Activated T-helper 1 cell treated with anti-CD3 and anti-CD28 coated beads, Interleukin-12 subunit alpha, Interleukin-12 subunit beta, Interleukin-2, Interleukin-4 antibody, amounts not matched to agents 30 ng/mL and 10 ng/mL and 1 ng/mL, durations not matched to agents 14 hours and 24 hours and 36 hours (primary cell): ENCODE measurements at regions of chr3 and their contacts with region 1.

Region 1: DNA sequence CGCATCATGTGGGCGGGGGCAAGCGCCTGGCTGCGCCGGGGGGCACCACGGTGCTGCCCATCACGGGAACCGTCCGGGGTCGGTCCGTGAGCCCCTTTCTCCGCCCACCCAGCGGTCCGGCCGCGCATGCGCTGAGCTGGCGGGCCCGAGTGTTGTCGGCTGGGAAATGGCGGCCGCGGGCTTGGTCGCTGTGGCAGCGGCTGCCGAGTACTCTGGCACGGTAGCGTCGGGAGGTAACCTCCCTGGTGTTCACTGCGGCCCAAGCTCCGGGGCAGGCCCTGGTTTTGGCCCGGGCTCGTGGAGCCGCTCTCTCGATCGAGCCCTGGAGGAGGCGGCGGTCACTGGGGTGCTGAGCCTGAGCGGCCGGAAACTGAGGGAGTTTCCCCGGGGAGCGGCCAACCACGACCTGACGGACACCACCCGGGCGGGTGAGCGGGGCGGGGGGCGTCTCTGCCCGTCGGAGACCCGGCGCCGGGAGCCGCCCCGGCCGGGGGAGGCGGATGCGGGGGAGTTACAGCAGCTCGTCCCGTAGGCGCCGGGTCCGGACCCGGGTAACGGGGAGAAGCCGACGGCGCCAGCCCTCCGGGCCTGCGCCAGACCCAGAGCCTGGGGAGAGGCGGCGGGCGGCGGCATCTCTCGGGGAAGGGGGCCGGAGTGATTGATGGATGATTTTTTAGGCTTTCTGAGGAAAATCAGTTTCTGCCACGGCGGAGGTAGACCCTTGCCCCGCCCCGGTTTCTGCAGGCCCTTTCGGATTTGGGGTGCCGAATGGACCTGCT is at the start of gene LRCH3:
- DNase-seq: peak; percentile 80
- H3K4me3 Mint-ChIP-seq: peak within 1 kb of the TSS; percentile 98
- H3K27ac Mint-ChIP-seq: peak within 1 kb of the TSS; percentile 98
- H3K4me1 Mint-ChIP-seq: peaks cover 29% of the 10 kb centered on the region
- H3K27me3 Mint-ChIP-seq: peaks cover 2% of the 10 kb centered on the region
- total RNA-seq, gene LRCH3: 50.0 and 57.8 TPM in 2 replicates

Region 2: GRCh38 chr3:197298341-197298857 is 492.9 kb before region 1 on chr3 and contains the start of gene DLG1:
- intact Hi-C with region 1: loop called (anchors 1 kb)
- DNase-seq: peak; percentile 64
- H3K4me3 Mint-ChIP-seq: peak within 1 kb of the TSS; percentile 95
- H3K27ac Mint-ChIP-seq: peak within 1 kb of the TSS; percentile 96
- H3K4me1 Mint-ChIP-seq: peaks cover 39% of the 10 kb centered on the region
- H3K27me3 Mint-ChIP-seq: peaks cover 28% of the 10 kb centered on the region
- total RNA-seq, gene DLG1: 85.0 and 87.1 TPM in 2 replicates

Region 3: DNA sequence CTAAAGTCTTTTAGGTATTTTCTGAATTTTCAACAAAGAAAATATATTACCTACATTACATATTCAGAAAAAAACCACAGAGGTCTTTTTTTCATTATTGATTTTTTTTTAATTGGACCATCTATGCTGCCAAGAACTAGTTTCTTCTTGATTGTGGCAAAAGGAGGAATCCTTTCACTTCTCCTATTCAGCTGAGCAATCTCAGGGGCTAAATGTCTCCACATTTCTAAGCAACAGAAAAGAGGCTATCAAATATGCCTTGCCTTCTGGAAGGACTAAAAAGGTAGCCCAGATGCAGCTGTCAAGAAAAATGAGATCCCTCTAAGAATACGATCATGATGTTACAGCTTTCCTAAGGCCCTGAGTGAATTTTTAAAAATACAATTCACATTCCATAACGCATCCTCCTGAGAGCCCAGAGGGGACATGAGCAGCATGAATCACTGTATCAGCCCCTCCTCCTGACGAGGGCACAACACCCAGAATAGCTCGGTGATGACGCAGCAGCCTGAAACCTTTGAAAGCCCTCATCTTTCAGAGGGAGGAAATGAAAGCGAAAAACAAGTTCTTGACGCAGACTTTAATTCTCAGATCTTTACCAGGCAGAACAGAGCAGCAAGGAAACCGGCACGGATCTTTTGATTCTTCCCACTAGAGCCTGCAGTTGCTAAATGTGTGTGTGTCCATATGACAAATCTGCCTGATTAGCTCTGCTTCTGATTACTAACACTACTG is 79.2 kb before region 1 on chr3:
- intact Hi-C with region 1: loop called (anchors 1 kb)
- DNase-seq: peak; percentile 78
- H3K4me3 Mint-ChIP-seq: peak overlapping the region; percentile 70
- H3K27ac Mint-ChIP-seq: peak overlapping the region; percentile 92
- H3K4me1 Mint-ChIP-seq: peaks cover 32% of the 10 kb centered on the region
- H3K27me3 Mint-ChIP-seq: no peaks in the 10 kb centered on the region

Region 4: GRCh38 chr3:197749601-197750395 is 41.5 kb before region 1 on chr3 and contains the start of gene FYTTD1:
- intact Hi-C with region 1: loop called (anchors 1 kb)
- DNase-seq: peak; percentile 85
- H3K4me3 Mint-ChIP-seq: peak within 1 kb of the TSS; percentile 97
- H3K27ac Mint-ChIP-seq: peak within 1 kb of the TSS; percentile 95
- H3K4me1 Mint-ChIP-seq: peaks cover 44% of the 10 kb centered on the region
- H3K27me3 Mint-ChIP-seq: peaks cover 13% of the 10 kb centered on the region
- total RNA-seq, gene FYTTD1: 59.0 and 77.2 TPM in 2 replicates

Region 5: GRCh38 chr3:197847866-197848401 is 56.6 kb after region 1 on chr3:
- intact Hi-C with region 1: loop called (anchors 2 kb)
- DNase-seq: peak; percentile 18
- H3K4me3 Mint-ChIP-seq: peak overlapping the region; percentile 52
- H3K27ac Mint-ChIP-seq: peak overlapping the region; percentile 83
- H3K4me1 Mint-ChIP-seq: peaks cover 30% of the 10 kb centered on the region
- H3K27me3 Mint-ChIP-seq: no peaks in the 10 kb centered on the region

Region 6: DNA sequence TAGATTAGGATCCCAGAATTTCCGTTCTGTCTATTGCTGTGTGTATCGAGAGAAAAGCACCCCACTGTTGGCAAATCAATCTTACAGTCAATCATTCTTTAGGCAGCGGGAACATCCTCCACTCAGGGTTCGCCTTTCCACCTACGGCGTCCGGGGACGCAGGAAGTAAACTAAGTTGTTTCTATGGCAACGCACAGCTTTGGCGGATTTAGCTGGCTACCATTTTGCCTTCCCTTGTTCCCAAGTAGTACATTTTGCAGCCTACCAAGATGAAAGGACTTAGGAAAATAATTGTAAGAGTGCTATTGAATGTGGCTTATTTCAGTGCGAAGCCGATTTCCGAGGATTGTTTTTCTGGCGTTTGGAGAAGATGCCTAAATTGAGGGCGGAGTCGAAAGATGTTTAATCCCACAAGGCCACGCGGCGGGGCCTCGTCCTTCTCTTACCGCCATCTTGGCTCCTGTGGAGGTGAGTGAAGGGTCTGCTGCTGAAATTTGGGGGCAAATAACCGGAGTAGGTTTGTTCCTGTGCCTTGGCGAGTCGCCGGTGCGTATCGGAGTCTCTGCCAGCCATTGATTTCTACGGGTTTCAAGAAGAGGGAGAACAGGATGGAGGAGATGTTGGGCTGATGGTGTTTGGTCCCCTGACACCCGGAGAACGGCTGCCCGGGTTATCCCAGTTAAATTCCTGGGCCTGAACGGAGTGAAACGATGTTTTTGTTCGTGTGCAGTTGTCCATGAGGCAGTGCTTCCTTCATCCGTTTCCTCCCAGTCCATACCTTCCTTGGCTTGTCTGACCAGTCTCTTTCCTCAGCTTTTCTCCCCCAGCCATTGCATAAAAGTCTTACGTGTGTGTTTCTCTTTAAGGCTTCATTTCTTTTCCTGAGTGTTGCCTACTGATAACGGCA is 158.7 kb after region 1 on chr3 and contains the start of gene RPL35A:
- intact Hi-C with region 1: loop called (anchors 2 kb)
- DNase-seq: peak; percentile 79
- H3K4me3 Mint-ChIP-seq: peak within 1 kb of the TSS; percentile 99
- H3K27ac Mint-ChIP-seq: peak within 1 kb of the TSS; percentile 97
- H3K4me1 Mint-ChIP-seq: peaks cover 48% of the 10 kb centered on the region
- H3K27me3 Mint-ChIP-seq: no peaks in the 10 kb centered on the region
- total RNA-seq, gene RPL35A: 1,253 and 1,262 TPM in 2 replicates